BJ (cell line): ENCODE measurements at regions of chr2 and their contacts with region 1.

Region 1: DNA sequence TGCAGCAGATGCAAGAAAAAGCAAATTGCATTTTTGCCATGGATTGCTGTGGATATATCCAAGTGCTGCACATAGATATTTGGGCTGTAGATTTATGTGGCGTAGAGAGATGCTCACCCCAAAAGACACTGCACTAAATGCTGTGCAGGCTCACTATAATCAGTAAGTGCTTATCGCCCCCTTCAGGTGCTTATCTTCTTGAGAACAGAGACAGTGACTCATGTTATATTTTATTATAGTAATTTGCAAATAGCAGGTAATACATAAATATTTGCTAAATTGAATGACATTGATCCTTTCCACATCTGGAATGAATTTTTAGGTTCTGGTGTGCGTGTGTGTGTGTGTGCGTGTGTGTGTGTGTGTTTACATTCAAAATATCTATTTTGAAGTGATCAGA is 36.8 kb upstream of the PLEKHM3 start:
- DNase-seq: no peak
- H3K4me3 ChIP-seq: no peak overlapping the region
- H3K27me3 ChIP-seq: no peaks in the 10 kb centered on the region; the same call in 1 of the 2 replicates
- CTCF ChIP-seq: peak; percentile 49

Region 2: DNA sequence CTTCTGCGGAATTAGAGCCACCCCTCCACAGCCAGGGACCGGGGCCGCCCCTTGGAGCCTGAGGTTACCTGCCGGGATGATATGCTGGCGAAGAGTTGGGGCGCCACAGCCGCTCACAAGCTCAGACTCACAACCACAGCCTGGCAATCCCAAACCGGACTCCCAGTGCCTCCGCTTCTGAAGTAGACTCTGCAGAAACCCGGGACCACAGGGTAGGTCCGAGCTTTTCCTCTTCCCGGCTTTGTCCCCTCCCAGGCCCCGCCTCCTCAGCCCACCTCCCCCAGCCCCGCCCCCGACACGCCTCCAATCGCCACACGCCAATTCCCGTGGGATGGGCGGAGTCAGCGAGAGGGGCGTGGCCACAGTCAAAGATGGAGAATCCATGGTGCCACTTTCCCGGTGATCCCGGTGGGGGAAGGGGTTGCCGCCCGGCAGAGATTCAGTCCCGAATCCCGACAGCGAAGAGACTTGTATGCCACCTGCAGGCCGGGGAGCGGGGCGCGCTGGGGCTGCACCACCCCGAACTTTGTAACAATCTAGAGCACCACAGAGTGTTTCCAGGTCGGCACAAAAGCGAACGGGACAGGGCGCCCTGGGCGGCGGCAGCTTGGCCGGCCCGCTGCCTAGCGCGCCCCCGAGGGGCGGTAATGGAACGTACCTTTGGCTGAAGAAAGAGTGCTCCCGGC is 192.9 kb after region 1 on chr2 and contains the start of gene IDH1:
- CTCF ChIA-PET with region 1: no interaction called
- POLR2A ChIA-PET with region 1: no interaction called
- DNase-seq: peak; percentile 48
- H3K4me3 ChIP-seq: peak within 1 kb of the TSS; percentile 67
- H3K27me3 ChIP-seq: no peaks in the 10 kb centered on the region
- CTCF ChIP-seq: peak; percentile 70
- polyA plus RNA-seq, gene IDH1: 41.9 and 63.2 TPM in 2 replicates

Region 3: GRCh38 chr2:208320686-208321085 is 258.6 kb after region 1 on chr2:
- CTCF ChIA-PET with region 1: no interaction called
- POLR2A ChIA-PET with region 1: interaction called, 13 read pairs
- DNase-seq: no peak
- H3K4me3 ChIP-seq: no peak overlapping the region
- H3K27me3 ChIP-seq: no peaks in the 10 kb centered on the region
- CTCF ChIP-seq: no peak